ENCODE measurements at regions of chr3 and their contacts with region 1.

Region 1: DNA sequence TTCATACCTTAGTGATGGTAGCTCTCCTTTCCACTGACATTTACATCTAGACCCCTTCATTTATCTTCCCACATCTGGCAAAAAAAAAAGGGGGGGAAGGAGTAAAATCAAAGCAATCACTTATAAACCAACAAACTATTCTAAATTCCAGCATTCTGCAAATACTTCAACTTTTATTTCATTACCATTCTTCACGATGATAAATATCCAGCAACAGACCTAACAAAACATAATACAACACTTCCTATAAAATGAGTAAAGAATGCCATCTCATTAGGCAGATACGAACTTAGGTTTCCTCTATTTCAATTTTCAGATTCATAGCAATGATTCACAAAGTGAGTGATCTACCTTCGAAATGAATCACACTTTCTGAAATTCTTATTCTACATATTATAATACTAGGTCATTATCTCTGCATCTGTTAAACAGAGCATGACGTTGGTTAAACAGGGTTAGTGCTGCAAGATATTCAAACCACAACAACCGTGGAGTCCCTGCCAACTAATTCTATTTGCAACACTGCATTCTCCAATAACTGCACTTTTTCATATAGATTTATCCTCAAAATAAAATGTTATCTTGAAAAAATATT is at the start of gene LRRFIP2:
- DNase-seq: peak; percentile 42
- ATAC-seq: peak; percentile 66
- H3K4me3 Mint-ChIP-seq: peak within 1 kb of the TSS; percentile 85
- H3K27ac Mint-ChIP-seq: peak within 1 kb of the TSS; percentile 82
- H3K4me1 Mint-ChIP-seq: peaks cover 48% of the 10 kb centered on the region
- H3K27me3 Mint-ChIP-seq: no peaks in the 10 kb centered on the region
- total RNA-seq, gene LRRFIP2: 20.6 to 25.1 TPM

Region 2: GRCh38 chr3:36911990-36912804 is 262.4 kb before region 1 on chr3:
- CTCF ChIA-PET with region 1: no interaction called
- POLR2A ChIA-PET with region 1: no interaction called
- intact Hi-C with region 1: loop called in 1 of 2 experiments (anchors 1 kb)
- DNase-seq: peak; percentile 57
- ATAC-seq: peak; percentile 87
- H3K4me3 Mint-ChIP-seq: peak overlapping the region; percentile 61
- H3K27ac Mint-ChIP-seq: peak overlapping the region; percentile 85
- H3K4me1 Mint-ChIP-seq: peaks cover 44% of the 10 kb centered on the region
- H3K27me3 Mint-ChIP-seq: peaks cover 2% of the 10 kb centered on the region

Region 3: GRCh38 chr3:36993326-36994283 is 181.0 kb before region 1 on chr3 and contains the start of gene MLH1:
- CTCF ChIA-PET with region 1: no interaction called
- POLR2A ChIA-PET with region 1: no interaction called
- intact Hi-C with region 1: loop called in 1 of 2 experiments (anchors 1 kb)
- DNase-seq: peak; percentile 98
- ATAC-seq: peak; percentile 90
- H3K4me3 Mint-ChIP-seq: no peak within 1 kb of the TSS
- H3K27ac Mint-ChIP-seq: no peak within 1 kb of the TSS
- H3K4me1 Mint-ChIP-seq: peaks cover 43% of the 10 kb centered on the region
- H3K27me3 Mint-ChIP-seq: no peaks in the 10 kb centered on the region
- total RNA-seq, gene MLH1: 89.0 to 135 TPM

Region 4: DNA sequence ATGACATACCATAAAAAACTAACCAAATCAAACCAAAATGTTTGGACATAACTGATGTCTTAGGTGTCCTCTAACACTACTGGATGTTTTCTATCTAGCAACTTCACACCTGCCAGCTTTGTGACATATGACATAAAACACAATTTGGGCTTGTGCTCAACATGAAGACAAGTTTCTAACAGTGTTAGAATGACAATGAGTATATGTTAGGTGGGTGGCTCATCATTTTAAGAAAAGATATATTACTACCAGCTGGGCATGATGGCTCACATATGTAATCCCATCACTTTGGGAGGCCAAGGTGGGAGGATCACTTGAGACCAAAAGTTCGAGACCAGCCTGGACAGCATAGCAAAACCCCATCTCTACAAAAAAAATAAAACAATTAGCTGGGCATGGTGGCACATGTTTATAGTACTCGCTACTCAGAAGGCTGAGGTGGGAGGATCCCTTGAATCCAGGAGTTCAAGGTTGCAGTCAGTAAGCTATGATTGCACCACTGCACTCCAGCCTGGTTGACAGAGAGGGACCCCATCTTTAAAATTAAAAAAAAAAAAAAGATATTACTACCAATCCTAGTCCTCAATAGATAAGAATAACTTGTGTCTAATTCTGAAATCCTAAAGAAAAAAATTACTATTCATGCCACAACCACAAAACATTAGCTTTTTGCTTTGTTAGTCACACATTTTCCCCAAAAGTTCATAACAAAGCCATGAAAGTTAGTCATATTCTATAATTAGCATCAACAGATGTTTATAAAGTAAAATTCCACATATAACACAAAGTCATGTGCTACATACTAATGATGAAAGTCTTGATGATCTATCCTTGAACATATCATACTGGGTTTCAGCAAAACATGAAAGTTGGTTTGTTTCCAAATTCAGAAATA is 60.1 kb before region 1 on chr3:
- CTCF ChIA-PET with region 1: interaction called, 4 read pairs
- POLR2A ChIA-PET with region 1: no interaction called
- intact Hi-C with region 1: loop called in 1 of 2 experiments (anchors 1 kb)
- DNase-seq: no peak
- ATAC-seq: peak; percentile 79
- H3K4me3 Mint-ChIP-seq: no peak overlapping the region
- H3K27ac Mint-ChIP-seq: no peak overlapping the region
- H3K4me1 Mint-ChIP-seq: peaks cover 19% of the 10 kb centered on the region
- H3K27me3 Mint-ChIP-seq: no peaks in the 10 kb centered on the region

Region 5: DNA sequence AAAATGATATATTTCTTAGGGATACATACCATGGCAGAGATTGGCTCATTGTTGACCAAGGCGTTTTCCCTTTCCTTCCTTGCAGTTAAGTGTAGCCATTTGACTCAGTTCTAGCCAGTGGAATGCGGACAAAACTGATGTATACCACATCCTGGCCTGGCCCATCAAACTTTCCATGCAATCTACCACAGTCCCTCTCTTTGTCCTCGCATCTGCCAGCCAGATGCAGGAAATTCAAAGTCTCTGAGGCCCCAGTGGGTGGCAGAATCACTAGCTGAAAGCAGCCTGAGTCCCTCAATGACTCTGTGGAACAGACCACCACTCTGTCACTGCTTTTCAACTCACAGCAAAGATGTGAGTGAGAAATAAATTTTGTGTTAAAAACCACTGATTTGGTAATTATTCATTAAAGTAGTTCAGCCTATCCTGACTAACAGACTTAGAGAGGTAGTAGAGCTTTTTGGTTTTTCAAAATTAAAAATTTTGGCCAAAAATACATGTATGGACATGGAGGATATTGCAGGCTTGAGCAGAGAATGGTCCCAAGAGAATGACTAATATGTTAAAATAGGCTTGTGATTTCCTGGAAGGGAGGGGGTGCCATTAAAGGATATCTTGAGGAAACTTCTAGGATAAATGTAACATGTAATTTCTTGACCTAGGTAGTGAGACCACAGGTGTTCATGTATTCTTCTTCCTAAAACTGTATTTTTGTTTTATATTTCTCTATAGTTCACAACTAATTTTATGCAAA is 11.2 kb before region 1 on chr3:
- CTCF ChIA-PET with region 1: interaction called, 7 read pairs
- POLR2A ChIA-PET with region 1: interaction called, 3 read pairs
- intact Hi-C with region 1: loop called (anchors 1 kb)
- DNase-seq: peak; percentile 69
- ATAC-seq: peak; percentile 77
- H3K4me3 Mint-ChIP-seq: no peak overlapping the region
- H3K27ac Mint-ChIP-seq: peak overlapping the region; percentile 82
- H3K4me1 Mint-ChIP-seq: peaks cover 32% of the 10 kb centered on the region
- H3K27me3 Mint-ChIP-seq: no peaks in the 10 kb centered on the region